Sciatic nerve (tissue), 2 donors: ENCODE measurements at regions of chr15 and their contacts with region 1.

Region 1: DNA sequence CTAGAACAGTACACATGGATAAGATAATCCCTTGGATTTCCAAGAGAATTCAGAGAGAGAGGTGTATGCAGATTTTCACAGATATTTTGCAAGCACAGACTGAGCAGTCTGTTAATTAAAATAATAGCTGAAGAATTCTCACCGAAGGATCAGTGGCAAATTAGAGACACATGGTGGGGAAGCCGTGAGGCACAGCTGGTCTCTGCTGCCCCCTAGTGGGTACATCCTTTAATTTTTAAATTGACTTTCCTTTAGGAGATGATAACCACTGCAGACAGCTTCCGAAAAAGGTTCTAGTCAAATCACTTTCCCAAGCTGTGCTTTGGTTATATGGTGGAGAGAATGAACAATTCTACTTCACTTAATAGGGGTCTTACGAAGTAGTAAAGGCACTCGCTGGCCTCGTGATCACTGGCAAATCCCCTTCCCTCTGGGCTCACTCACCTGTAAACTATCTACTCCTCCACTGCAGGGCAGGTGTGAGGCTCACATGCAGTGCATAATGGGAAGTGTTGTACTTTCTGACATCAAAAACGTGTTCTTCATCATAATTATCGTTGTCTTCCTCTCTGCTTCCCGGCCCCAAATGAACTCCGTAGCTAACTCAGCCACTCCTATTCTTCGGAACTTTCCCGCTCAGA is 19.5 kb downstream of the MESD start:
- DNase-seq: peak; percentile 73
- ATAC-seq: peak; percentile 70

Region 2: GRCh38 chr15:80455668-80456442 is 514.3 kb before region 1 on chr15:
- intact Hi-C with region 1: loop called (anchors 10 kb)
- DNase-seq: no peak
- ATAC-seq: peak; percentile 82

Region 3: GRCh38 chr15:80567721-80568157 is 402.4 kb before region 1 on chr15:
- intact Hi-C with region 1: loop called (anchors 5 kb)
- DNase-seq: no peak
- ATAC-seq: peak; percentile 87

Region 4: DNA sequence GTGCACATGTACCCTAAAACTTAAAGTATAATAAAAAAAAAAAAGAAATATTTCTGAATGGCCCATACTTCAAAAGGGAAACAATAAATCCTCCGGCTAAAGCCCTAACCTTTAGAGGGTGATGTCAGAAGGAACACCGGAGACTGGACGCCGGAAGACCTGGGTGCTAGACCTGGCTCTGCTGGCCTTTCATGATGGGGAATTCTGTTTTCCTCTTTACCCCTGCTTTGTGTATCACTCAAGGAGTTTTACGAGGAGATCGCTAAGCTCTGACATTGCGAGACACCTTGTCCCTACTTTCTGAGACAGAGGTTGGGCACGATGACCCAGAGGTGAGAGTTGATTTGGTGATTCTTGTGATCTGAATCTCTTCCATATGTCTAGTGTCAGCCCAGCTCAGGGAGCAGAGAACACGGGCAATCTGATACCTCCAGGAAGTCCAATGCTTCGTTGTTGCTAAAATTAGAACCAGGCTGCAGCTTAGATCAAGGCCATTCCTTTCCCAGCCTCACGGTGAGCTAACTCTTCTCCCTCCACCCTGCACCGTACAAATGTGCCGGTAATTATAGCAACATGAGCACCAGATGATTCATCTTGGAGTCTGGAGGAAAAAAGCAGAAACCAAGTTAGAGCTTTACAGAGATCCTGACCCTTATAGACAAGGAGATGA is 121.9 kb after region 1 on chr15:
- intact Hi-C with region 1: no loop called
- DNase-seq: no peak
- ATAC-seq: peak; percentile 76